Activated B cell treated with CpG ODN at 0.5 μM for 24 hours (primary cell): ENCODE measurements at regions of chr13 and their contacts with region 1.

Region 1: DNA sequence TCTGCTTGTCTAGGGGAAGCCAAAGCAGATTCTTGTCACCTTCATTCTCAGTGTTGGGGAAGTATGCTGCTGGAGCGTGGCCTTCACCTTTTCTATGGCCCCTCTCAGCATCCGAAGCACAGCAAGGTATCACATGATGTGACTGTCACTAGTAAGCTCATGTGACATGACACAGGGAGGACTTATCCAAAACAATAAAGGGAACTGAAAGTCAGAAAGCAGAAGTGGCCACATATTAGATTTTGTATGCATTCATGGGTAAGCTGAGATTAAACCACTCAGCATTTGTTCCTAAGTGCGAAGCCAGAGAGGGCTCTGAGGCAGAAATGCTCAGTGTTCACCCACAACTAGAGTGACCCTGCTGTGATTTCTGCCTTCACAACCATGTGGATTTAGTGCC is 72.8 kb upstream of the PCDH8 start:
- DNase-seq: no peak
- ATAC-seq: peak; percentile 92
- H3K4me3 Mint-ChIP-seq: no peak overlapping the region
- H3K27ac Mint-ChIP-seq: peak overlapping the region; percentile 75
- H3K4me1 Mint-ChIP-seq: peaks cover 15% of the 10 kb centered on the region
- H3K27me3 Mint-ChIP-seq: peaks cover 5% of the 10 kb centered on the region
- CTCF ChIP-seq: no peak

Region 2: GRCh38 chr13:52850396-52851136 is 70.6 kb before region 1 on chr13:
- CTCF ChIA-PET with region 1: no interaction called
- POLR2A ChIA-PET with region 1: no interaction called
- intact Hi-C with region 1: loop called (anchors 5 kb)
- DNase-seq: no peak
- ATAC-seq: peak; percentile 62
- H3K4me3 Mint-ChIP-seq: peak overlapping the region; percentile 75
- H3K27ac Mint-ChIP-seq: no peak overlapping the region
- H3K4me1 Mint-ChIP-seq: peaks cover 31% of the 10 kb centered on the region
- H3K27me3 Mint-ChIP-seq: peaks cover 61% of the 10 kb centered on the region
- CTCF ChIP-seq: no peak

Region 3: DNA sequence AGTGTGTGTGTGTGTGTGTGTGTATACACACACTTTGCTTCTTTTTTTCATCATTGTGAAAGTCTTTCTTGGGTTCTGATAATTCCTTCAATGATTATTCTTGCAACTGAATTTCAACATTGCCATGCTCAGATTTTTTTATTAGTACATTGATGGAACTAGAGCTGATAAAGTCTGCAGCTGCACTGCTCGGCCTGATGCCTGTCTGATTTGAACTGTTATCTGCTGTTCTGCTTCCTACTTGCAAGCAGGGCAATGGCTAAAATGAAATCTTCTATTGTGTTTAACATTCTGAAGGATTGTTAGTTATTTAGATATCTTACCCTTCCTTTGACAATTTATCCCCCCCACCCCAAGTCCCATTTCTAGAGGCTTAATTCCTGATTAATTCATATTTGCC is 168.8 kb after region 1 on chr13:
- CTCF ChIA-PET with region 1: no interaction called
- POLR2A ChIA-PET with region 1: no interaction called
- intact Hi-C with region 1: no loop called
- DNase-seq: no peak
- ATAC-seq: no peak
- H3K4me3 Mint-ChIP-seq: no peak overlapping the region
- H3K27ac Mint-ChIP-seq: no peak overlapping the region
- H3K4me1 Mint-ChIP-seq: no peaks in the 10 kb centered on the region
- H3K27me3 Mint-ChIP-seq: no peaks in the 10 kb centered on the region
- CTCF ChIP-seq: no peak